AG04449 (cell line): ENCODE measurements at regions of chr14 and their contacts with region 1.

Region 1: GRCh38 chr14:54773171-54773975 is 129.3 kb downstream of the GCH1 start:
- DNase-seq: peak; percentile 99
- H3K4me3 ChIP-seq: peak overlapping the region; percentile 19
- CTCF ChIP-seq: peak; percentile 73

Region 2: DNA sequence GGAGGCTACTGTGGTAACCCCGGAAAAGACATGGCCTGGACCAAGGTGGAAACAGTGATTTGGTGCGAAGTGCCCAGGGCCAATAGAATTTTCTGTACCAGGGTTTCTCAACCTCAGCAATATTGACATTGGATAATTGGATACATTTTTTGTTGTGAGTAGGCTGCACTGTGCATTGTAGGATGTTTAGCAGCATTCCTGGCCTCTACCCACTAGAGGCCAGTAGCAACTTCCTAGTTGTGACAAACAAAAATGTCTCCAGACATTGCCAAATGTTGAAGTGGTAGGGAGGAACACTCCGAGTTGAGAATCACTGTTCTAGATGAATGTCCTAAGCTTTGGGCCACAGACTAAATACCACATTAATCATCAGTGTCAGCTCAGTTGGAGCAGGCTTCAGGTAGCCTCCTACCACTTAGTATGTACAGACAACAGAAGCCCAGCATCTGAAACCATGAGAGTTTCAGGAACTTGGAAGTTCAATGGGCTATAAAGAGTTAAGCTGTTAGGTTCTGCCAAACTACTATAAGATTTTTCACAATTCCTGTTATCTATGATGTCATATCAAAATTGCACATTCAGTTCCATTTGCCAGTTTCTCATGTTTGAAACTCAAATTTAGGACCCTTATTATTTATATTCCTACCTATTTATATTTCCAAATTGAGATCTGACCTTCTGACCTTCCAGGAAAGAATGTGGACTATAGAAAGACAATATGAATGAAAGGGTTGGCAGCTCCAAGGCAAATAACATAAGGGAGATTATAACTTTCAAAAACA is 269.7 kb before region 1 on chr14:
- CTCF ChIA-PET with region 1: interaction called, 22 read pairs
- POLR2A ChIA-PET with region 1: interaction called, 3 read pairs
- DNase-seq: no peak
- H3K4me3 ChIP-seq: no peak overlapping the region
- CTCF ChIP-seq: peak; percentile 43

Region 3: GRCh38 chr14:54566410-54567223 is 206.8 kb before region 1 on chr14 and contains the start of gene SAMD4A:
- CTCF ChIA-PET with region 1: interaction called, 247 read pairs
- POLR2A ChIA-PET with region 1: interaction called, 67 read pairs
- DNase-seq: no peak
- H3K4me3 ChIP-seq: peak within 1 kb of the TSS; percentile 76
- CTCF ChIP-seq: peak; percentile 47

Region 4: GRCh38 chr14:54642801-54643697 is 130.3 kb before region 1 on chr14:
- CTCF ChIA-PET with region 1: interaction called, 17 read pairs
- POLR2A ChIA-PET with region 1: no interaction called
- DNase-seq: no peak
- H3K4me3 ChIP-seq: no peak overlapping the region
- CTCF ChIP-seq: peak; percentile 7

Region 5: GRCh38 chr14:54730156-54730961 is 43.0 kb before region 1 on chr14:
- CTCF ChIA-PET with region 1: interaction called, 11 read pairs
- POLR2A ChIA-PET with region 1: no interaction called
- DNase-seq: peak; percentile 38
- H3K4me3 ChIP-seq: peak overlapping the region; percentile 13
- CTCF ChIP-seq: no peak

Region 6: GRCh38 chr14:54805521-54806322 is 32.3 kb after region 1 on chr14:
- CTCF ChIA-PET with region 1: interaction called, 38 read pairs
- POLR2A ChIA-PET with region 1: interaction called, 5 read pairs
- DNase-seq: peak; percentile 5
- H3K4me3 ChIP-seq: no peak overlapping the region; the same call in 1 of the 2 replicates
- CTCF ChIP-seq: peak; percentile 92

Region 7: DNA sequence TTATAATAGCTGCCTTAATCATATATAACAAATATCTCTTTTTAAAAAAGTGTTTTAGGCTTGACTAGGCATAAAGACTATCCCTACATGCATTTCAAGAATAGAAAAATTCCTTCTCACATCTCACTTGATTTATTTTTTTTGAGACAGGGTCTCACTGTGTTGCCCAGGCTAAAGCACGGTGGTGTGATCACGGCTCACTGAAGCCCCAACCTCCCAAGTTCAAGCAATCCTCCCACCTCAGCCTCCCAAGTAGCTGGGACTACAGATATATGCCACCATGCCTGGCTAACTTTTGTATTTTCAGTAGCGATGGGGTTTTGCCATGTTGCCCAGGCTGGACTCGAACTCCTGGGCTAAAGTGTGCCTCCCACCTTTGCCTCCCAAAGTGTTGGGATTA is 194.1 kb after region 1 on chr14:
- CTCF ChIA-PET with region 1: no interaction called
- POLR2A ChIA-PET with region 1: no interaction called
- DNase-seq: no peak
- H3K4me3 ChIP-seq: no peak overlapping the region
- CTCF ChIP-seq: no peak